ENCODE measurements at regions of chr7 and their contacts with region 1.

Region 1: GRCh38 chr7:25565949-25566348 is 337.7 kb upstream of the NPVF start:
- DNase-seq: peak; percentile 77
- H3K4me3 Mint-ChIP-seq: no peak overlapping the region
- H3K27ac Mint-ChIP-seq: no peak overlapping the region
- H3K4me1 Mint-ChIP-seq: peaks cover 2% of the 10 kb centered on the region
- H3K27me3 Mint-ChIP-seq: no peaks in the 10 kb centered on the region

Region 2: GRCh38 chr7:25179771-25180591 is 386.0 kb before region 1 on chr7:
- CTCF ChIA-PET with region 1: interaction called, 3 read pairs
- intact Hi-C with region 1: loop called (anchors 5 kb)
- DNase-seq: peak; percentile 94
- H3K4me3 Mint-ChIP-seq: peak overlapping the region; percentile 83
- H3K27ac Mint-ChIP-seq: peak overlapping the region; percentile 81
- H3K4me1 Mint-ChIP-seq: peaks cover 19% of the 10 kb centered on the region
- H3K27me3 Mint-ChIP-seq: no peaks in the 10 kb centered on the region

Region 3: DNA sequence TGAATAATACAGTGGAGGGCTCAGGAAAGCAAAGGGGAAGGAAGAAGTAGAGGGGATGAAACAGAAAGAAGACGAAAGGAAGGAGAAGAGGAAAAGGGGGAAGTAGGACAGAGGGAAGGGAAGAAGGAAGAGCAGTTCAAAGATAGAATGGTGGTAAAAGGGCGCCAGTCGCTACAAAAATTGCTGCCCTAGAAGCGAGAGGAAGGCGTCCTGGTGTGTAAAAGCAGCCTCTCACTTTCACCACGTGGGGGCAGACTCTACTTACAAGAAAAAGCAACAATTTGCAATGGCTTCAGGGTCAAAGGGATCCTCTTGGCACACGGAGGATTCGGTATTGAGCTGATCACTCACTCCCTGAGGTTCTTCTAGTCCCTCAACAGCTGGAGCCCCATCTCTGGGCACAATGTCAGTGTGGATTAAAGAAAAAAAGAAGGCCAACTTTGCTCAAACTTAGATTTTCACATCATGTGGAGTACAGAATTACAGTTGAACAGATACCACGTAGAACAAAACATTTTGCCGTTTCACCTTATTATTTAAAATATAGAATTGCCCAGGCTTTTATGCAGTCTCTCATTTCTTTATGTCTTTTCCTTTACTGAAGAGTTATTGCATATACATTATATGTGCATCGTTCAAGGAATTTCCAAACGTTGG is 306.2 kb before region 1 on chr7:
- CTCF ChIA-PET with region 1: interaction called, 99 read pairs
- intact Hi-C with region 1: loop called (anchors 1 kb)
- DNase-seq: peak; percentile 84
- H3K4me3 Mint-ChIP-seq: peak overlapping the region; percentile 20
- H3K27ac Mint-ChIP-seq: no peak overlapping the region
- H3K4me1 Mint-ChIP-seq: peaks cover 24% of the 10 kb centered on the region
- H3K27me3 Mint-ChIP-seq: no peaks in the 10 kb centered on the region

Region 4: GRCh38 chr7:25389489-25390106 is 176.4 kb before region 1 on chr7:
- CTCF ChIA-PET with region 1: interaction called, 113 read pairs
- intact Hi-C with region 1: loop called (anchors 1 kb)
- DNase-seq: peak; percentile 21
- H3K4me3 Mint-ChIP-seq: no peak overlapping the region
- H3K27ac Mint-ChIP-seq: no peak overlapping the region
- H3K4me1 Mint-ChIP-seq: peaks cover 3% of the 10 kb centered on the region
- H3K27me3 Mint-ChIP-seq: peaks cover 2% of the 10 kb centered on the region

Region 5: DNA sequence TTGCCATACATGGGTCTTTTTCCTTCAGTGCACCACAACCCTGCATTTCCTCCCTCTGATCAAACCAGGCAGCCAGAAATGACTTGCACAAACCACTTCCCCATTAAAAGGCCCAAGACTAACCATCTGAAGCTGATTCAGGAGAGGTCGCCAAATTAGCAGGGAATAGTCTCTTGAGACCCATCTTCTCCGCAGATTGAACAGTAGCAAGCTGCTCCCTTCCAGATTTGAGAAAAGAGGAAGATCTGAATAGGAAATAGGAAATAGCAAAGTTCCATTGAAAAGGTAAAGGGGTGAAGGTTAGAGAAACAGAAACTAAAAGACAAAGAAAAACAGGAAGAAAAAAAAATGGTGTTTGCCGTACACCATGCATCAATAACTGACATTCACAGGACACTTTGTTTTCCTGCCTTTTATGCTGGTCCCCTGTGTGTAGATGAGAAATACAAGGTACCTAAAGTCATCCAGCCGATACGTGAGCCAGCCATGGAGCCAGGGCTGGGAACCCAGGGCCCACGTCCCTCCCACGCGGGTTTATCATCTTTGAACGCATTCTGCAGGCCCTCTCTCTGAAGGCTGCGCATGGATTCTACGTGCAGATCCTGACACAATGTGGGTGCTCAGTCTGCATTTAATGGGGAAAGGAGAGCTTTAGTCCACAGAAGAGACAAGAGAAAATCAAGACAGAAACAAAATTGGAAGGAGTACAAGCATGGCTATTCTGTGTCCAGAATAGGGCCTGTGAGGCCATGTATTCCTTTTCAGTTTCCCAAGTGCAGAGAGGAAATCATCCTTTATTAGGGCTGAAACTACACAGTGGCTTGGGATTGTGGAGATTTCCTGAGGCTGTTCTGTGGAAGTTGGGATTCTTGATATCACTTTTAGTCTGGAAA is 69.2 kb before region 1 on chr7:
- CTCF ChIA-PET with region 1: interaction called, 7 read pairs
- intact Hi-C with region 1: loop called (anchors 5 kb)
- DNase-seq: peak; percentile 34
- H3K4me3 Mint-ChIP-seq: peak overlapping the region; percentile 60
- H3K27ac Mint-ChIP-seq: peak overlapping the region; percentile 77
- H3K4me1 Mint-ChIP-seq: peaks cover 8% of the 10 kb centered on the region
- H3K27me3 Mint-ChIP-seq: no peaks in the 10 kb centered on the region

Region 6: GRCh38 chr7:25527665-25528170 is 38.2 kb before region 1 on chr7:
- CTCF ChIA-PET with region 1: interaction called, 13 read pairs
- intact Hi-C with region 1: no loop called
- DNase-seq: no peak
- H3K4me3 Mint-ChIP-seq: no peak overlapping the region
- H3K27ac Mint-ChIP-seq: no peak overlapping the region
- H3K4me1 Mint-ChIP-seq: peaks cover 9% of the 10 kb centered on the region
- H3K27me3 Mint-ChIP-seq: no peaks in the 10 kb centered on the region

Region 7: DNA sequence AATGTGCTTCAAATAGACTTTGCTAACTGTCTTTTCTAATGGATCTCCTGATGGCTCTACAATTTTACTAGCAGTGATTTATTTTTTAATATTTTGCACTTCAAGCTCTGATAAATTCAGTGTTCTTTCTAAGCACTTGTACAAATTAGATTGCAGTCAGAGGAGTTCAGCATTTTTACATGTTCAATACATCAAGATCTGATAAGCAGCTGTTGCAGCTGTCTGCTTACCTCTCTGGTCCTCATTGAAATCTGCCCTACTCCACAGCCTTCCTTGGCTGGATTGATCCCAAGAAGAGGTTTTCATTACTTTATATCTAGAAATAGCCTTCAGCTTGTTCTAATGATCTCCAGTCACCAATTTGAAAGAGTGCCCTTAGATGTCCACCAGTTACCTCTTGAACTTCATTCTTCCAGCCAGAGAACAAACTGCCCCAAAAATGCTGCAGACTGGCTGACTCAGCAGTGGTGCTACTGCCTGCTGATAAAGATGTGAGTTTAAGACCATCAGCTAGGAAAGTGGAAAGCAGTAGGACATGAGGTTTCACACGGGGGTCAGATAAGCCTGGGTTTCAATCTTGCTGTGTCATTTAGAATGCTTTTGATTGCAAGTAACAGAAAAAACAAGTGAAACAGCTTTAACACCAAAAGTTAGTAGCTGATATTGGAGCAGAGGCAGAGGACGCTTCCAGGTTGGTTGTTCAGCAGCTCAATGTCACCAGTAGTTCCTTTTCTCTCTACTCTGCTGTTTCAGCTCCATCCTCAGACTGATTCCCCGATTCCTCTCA is 13.2 kb after region 1 on chr7:
- CTCF ChIA-PET with region 1: interaction called, 16 read pairs
- intact Hi-C with region 1: no loop called
- DNase-seq: no peak
- H3K4me3 Mint-ChIP-seq: no peak overlapping the region
- H3K27ac Mint-ChIP-seq: no peak overlapping the region
- H3K4me1 Mint-ChIP-seq: no peaks in the 10 kb centered on the region
- H3K27me3 Mint-ChIP-seq: no peaks in the 10 kb centered on the region

Measured in activated naive CD4-positive, alpha-beta T cell treated with anti-CD3 and anti-CD28 coated beads for 36 hours (primary cell).